ENCODE measurements at regions of chr9 and their contacts with region 1.

Region 1: DNA sequence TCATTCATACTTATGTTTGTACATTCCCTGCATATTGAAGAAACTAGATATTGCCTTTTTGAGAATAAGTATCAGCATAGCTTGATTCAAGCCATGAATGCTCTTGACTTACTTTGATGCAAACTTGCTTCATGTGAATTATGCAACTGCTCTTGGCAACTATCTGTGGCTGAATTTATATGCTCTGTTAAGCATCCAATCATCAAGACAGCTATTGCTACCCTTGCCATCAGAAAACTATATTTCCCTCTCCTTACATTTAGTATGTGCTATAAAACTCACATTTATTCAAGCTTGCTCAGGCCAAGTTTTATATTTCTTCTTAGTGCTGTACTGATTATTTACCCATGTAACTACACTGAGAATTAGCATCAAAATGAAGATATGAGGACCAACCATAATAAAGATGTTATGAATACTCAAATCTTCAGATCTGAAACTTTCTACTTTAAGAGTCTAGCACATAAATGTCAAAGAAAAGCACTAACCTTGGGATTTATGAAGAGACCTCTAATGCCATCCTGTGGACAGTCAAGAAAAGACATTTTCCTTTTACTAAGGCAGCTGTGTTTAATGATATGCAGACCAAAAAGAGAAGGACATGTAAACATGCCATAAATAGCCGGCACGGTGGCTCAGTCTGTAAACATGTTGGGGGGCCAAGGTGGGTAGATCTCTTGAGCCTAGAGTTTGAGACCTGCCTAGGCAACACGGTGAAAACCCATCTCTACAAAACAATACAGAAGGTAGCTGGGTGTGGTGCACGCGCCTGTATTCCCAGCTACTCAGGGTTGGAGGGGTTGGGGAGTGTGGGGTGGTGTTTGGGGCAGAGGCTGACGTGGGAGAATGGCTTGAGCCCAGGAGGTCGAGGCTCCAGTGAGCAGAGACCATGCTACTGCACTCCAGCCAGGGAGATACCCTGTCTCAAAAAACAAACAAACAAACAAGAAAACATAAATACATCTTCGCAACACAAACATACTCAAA is 267.0 kb upstream of the TYRP1 start:
- DNase-seq: no peak
- ATAC-seq: no peak
- H3K4me3 ChIP-seq: no peak overlapping the region
- H3K27ac ChIP-seq: no peak overlapping the region
- H3K4me1 ChIP-seq: no peaks in the 10 kb centered on the region
- H3K27me3 ChIP-seq: no peaks in the 10 kb centered on the region
- CTCF ChIP-seq: no peak
- POLR2A ChIP-seq: no peak

Region 2: DNA sequence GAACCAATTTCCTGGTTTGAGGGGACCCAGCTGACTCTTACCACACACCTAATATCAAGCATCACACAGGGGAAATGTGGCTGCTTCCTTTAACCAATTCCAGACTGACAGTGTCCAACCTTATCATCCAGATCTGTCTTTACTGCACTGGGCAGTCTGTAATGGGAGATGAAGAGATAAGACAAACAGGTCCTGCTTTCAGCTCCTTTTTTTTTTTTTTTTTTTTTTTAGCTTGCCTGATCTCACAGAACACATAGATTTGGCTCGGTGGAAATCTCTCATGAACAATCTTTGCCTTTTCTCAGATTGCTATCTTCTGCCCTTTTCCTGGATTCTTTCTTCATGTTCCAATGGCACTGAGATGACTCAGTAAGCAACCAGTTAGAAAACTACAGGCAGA is 68.3 kb after region 1 on chr9:
- intact Hi-C with region 1: loop called in 1 of 10 experiments (anchors 10 kb)
- DNase-seq: no peak
- ATAC-seq: no peak
- H3K4me3 ChIP-seq: no peak overlapping the region
- H3K27ac ChIP-seq: no peak overlapping the region
- H3K4me1 ChIP-seq: no peaks in the 10 kb centered on the region
- H3K27me3 ChIP-seq: no peaks in the 10 kb centered on the region
- CTCF ChIP-seq: no peak
- POLR2A ChIP-seq: no peak

Measured in heart left ventricle (tissue), 16 donors.